AG04450 (cell line): ENCODE measurements at regions of chr1 and their contacts with region 1.

Region 1: DNA sequence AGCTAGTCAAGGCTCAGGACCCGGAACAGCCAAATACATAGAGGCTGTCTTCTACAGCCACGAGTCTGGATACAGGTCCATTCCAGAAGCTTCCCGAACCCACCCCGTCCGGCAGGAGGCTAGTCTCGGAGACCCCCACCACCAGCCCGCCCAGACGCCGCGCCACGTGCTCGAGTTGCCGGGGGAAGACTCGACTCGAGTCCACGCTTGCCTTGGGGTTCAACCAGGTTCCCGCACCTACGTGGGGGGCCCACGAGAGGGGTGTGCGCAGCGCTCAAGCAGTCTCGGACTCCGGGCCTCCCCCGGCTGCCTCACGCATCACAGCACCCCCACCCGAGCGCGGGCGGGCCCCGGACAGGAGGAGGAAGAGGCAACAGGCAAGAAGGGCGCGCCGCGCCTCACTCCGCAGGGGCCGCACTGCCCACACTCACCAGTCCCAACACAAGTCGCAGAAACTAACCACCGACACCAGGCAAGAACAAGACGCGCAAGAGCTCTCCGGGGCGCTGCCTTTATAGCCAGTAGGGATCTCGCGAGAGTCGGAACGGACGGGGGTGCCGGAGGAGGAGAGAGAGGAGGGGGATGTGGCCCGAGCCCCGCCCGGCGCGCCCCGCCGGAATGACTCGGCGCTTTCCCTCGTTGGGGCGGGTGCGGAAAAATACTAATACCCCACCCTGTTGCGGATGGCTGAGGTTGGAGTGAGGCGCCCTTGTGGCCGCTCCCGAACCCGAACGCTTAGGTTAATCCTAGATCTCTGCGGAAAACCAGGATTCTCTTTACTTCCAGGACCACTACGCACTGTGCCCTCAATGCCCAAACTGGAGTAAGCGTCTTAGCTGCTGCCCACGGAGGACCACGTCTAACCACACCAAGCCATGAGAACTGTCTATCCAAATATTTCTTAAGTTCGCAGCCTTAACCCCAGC is at the start of gene PRDX1:
- DNase-seq: peak; percentile 91
- H3K4me3 ChIP-seq: peak within 1 kb of the TSS; percentile 96
- H3K27ac ChIP-seq: peak within 1 kb of the TSS; percentile 99
- H3K27me3 ChIP-seq: no peaks in the 10 kb centered on the region
- CTCF ChIP-seq: peak; percentile 26
- polyA plus RNA-seq, gene PRDX1: 988 and 1,110 TPM in 2 replicates

Region 2: GRCh38 chr1:44976252-44976651 is 545.4 kb before region 1 on chr1:
- CTCF ChIA-PET with region 1: no interaction called
- POLR2A ChIA-PET with region 1: interaction called, 12 read pairs
- DNase-seq: no peak
- H3K4me3 ChIP-seq: no peak overlapping the region
- H3K27ac ChIP-seq: no peak overlapping the region
- H3K27me3 ChIP-seq: no peaks in the 10 kb centered on the region
- CTCF ChIP-seq: no peak

Region 3: DNA sequence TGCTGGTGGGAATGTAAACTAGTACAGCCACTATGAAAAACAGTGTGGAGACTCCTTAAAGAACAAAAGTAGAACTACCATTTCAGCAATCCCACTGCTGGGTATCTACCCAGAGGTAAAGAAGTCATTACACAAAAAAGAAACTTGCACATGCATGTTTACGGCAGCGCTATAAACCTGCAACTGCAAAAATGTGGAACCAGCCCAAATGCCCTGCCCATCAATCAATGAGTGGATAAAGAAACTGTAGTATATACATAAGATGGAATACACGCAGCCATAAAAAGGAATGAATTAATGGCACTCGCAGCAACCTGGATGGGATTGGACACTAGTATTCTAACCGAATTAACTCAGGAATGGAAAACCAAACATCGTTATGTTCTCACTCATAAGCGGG is 366.2 kb before region 1 on chr1:
- CTCF ChIA-PET with region 1: no interaction called
- POLR2A ChIA-PET with region 1: no interaction called
- DNase-seq: no peak
- H3K4me3 ChIP-seq: no peak overlapping the region
- H3K27ac ChIP-seq: no peak overlapping the region
- H3K27me3 ChIP-seq: no peaks in the 10 kb centered on the region
- CTCF ChIP-seq: no peak

Region 4: DNA sequence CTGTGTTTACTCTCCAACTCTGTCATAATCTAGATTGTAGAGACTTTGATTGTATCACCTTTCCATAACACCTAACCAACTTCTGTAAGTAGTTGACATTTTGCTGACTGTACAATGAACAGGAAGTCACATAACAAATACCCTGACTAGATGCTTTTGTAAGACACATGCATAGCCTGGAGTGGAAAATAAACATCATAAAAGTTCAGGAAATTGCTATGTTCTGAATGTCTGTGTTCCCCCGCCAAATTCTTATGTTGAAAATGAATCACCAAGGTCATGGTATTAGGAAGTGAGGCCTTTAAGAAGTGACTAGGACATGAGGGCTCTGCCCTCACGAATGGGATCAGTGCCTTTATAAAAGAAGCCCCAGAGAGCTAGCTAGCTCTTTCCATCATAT is 274.9 kb before region 1 on chr1:
- CTCF ChIA-PET with region 1: no interaction called
- POLR2A ChIA-PET with region 1: no interaction called
- DNase-seq: peak; percentile 43
- H3K4me3 ChIP-seq: no peak overlapping the region
- H3K27ac ChIP-seq: peak overlapping the region; percentile 52
- H3K27me3 ChIP-seq: no peaks in the 10 kb centered on the region
- CTCF ChIP-seq: no peak

Region 5: DNA sequence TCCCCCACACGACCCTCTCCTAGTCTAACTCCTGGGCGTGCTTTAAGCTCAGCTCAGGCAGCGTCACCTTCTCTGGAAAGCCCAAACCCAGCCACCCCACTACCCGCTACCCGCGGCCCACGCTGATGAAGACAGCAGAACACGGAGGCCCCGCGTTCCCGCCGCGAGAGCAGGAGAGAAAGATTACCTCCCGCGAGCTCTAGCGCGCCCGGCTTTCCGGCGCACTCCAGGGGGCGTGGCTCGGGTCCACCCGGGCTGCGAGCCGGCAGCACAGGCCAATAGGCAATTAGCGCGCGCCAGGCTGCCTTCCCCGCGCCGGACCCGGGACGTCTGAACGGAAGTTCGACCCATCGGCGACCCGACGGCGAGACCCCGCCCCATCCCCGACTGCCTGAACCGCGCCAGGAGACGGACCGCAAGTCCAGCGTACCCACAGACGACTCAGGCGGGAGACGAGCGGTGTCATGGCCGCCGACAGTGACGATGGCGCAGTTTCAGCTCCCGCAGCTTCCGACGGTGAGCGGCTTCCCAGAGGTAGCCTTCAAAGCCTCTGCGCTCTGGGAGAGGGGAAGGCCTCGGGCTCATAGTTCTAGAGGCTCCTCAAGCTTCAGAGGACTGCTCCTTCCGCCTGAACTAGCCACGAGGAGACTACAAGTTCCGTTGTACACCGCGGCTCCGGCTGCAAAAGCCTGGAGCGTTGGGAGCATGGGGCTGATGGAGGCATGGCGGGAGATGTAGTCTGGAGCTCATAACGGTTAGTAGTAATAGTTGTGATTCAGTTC is 181.7 kb before region 1 on chr1 and contains the starts of genes MUTYH and TOE1:
- CTCF ChIA-PET with region 1: interaction called, 3 read pairs
- POLR2A ChIA-PET with region 1: interaction called, 29 read pairs
- DNase-seq: peak; percentile 70
- H3K4me3 ChIP-seq: peak within 1 kb of the TSS; percentile 73
- H3K27ac ChIP-seq: peak within 1 kb of the TSS; percentile 94
- H3K27me3 ChIP-seq: no peaks in the 10 kb centered on the region
- CTCF ChIP-seq: peak; percentile 11; the same call in 1 of the 2 replicates
- polyA plus RNA-seq, gene MUTYH: 5.8 and 6.2 TPM in 2 replicates
- polyA plus RNA-seq, gene TOE1: 8.1 and 10.1 TPM in 2 replicates

Region 6: DNA sequence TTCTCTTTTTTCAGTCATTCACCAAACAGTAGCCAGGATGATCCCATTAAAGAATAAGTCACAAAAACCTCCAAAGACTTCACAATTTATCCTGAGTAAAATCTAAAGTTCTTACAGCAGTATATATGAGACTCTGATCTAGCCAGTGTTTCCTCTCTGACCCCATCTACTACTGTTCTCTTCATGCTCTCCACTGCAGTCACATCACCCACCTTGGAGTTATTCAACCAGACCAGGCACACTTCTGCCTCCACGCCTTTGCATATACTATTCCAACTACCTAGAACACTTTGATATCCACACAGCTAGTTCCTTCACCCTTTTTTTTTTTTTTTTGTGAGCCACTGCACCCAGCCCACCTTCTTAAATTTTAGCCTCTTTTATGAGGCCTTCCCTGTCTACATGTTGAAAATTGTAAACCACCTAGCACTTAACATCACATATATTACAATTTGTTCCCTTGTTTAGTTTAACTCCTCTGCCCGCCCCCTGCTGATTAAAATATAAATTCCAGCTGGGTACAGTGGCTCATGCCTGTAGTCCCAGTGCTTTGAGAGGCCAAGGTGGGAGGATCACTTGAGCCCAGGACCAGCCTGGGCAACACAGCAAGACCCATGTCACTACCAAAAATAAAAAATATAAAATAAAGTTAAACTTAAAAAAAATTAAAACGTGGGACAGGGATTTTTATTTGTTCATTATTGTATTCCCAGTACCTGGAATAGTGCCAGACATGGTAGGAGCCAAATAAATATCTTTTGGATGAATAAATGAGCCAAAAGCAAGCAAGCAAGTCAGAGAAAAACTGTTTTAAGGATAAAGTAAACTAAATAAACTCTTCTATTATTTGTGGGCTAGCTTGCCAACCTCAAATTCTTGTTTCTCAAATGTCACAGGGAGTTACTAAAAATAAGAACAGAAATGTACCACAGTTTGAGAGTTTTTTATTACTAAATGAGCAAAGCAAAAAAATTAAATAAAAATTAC is 146.3 kb before region 1 on chr1:
- CTCF ChIA-PET with region 1: no interaction called
- POLR2A ChIA-PET with region 1: no interaction called
- DNase-seq: no peak
- H3K4me3 ChIP-seq: no peak overlapping the region
- H3K27ac ChIP-seq: no peak overlapping the region
- H3K27me3 ChIP-seq: peaks cover 2% of the 10 kb centered on the region
- CTCF ChIP-seq: 0 out of 2 replicates have a peak, but pooled peaks have one; percentile 7

Region 7: DNA sequence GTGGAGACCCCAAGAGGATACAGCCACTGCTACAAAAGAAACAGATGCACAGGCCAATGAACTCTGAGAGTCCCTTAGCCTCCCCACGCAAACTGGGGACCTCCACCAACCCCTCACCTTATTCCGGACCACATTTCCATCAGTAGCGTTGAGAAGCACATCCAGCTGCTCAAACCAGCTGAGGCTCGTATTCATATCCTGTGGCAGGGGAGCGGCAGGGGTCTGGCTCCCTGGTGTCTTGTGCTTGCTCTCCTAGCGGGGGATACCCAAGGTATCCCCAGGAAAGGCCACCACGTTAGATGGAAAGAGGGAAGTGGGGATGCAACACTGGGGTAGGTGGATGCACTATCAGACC is 22.3 kb before region 1 on chr1:
- CTCF ChIA-PET with region 1: no interaction called
- POLR2A ChIA-PET with region 1: interaction called, 66 read pairs
- DNase-seq: no peak
- H3K4me3 ChIP-seq: peak overlapping the region; percentile 87
- H3K27ac ChIP-seq: no peak overlapping the region
- H3K27me3 ChIP-seq: no peaks in the 10 kb centered on the region
- CTCF ChIP-seq: no peak

Region 8: DNA sequence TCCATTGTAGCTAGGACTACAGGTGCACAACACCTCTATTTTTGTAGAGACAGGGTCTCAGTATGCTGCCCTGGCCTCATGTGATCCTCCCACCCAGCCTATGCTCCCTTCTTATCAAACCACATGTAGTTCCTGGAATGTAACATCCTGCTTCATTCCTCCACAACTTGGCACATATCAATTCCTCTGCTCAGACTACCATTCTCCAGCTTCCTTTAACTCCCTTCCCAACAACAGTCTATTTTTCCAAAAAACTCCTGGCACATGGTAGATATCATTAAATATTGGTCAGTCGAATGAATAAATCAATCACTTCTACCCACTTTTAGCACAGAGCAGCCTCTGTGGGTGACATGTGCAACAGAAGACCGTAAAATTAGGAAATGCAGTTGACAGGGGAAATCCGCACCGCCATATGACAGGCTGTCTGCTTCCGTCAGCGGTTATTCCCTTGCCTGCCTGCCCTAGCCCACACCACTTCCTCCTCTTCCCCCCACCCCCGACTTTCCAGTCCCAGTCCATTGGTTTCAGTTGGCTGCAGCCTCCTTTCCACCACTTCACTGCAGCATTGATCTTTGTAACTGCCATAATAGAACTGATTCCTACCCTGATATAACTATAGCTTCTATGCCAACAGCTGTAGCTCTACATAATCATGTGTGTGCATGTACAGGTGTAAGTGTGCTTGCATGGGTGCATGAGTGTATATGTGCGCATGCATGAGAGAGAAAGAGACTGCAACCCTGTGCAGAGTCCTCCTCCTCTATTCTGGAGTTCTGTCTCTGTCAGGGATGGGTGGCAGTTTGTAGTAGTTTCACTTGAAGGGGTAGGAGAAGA is 22.1 kb after region 1 on chr1:
- CTCF ChIA-PET with region 1: interaction called, 3 read pairs
- POLR2A ChIA-PET with region 1: interaction called, 134 read pairs
- DNase-seq: no peak
- H3K4me3 ChIP-seq: no peak overlapping the region
- H3K27ac ChIP-seq: no peak overlapping the region
- H3K27me3 ChIP-seq: no peaks in the 10 kb centered on the region
- CTCF ChIP-seq: no peak

Region 9: DNA sequence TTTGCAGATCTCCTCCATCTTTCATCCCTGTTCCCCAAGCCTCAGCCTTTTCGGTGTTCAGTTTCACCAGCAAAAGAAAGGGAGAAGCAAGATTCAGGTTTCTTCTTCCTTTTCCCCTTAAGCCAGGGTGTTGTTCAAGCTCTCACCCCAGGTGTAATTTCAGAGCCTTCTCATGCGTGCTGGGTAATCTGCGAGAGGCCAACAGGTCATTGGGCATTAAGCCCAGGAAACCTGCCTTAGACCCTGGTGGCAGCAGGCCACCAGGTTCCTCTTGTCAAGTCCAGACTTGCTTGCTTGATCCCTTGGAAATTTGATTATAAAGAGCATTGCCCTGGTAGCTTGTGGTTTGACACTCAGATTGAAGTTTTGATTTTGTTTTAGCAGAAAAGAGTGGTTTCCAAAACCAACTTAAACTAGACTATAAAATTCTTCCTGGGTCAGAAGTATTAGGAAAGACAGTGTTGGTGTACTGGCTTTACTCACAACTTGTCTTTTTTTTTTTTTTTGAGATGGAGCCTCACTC is 35.8 kb after region 1 on chr1:
- CTCF ChIA-PET with region 1: no interaction called
- POLR2A ChIA-PET with region 1: interaction called, 20 read pairs
- DNase-seq: no peak
- H3K4me3 ChIP-seq: no peak overlapping the region
- H3K27ac ChIP-seq: no peak overlapping the region
- H3K27me3 ChIP-seq: no peaks in the 10 kb centered on the region
- CTCF ChIP-seq: no peak

Region 10: GRCh38 chr1:45583264-45583665 is 61.6 kb after region 1 on chr1:
- CTCF ChIA-PET with region 1: no interaction called
- POLR2A ChIA-PET with region 1: interaction called, 46 read pairs
- DNase-seq: peak; percentile 90
- H3K4me3 ChIP-seq: peak overlapping the region; percentile 99
- H3K27ac ChIP-seq: peak overlapping the region; percentile 75
- H3K27me3 ChIP-seq: no peaks in the 10 kb centered on the region
- CTCF ChIP-seq: no peak